ENCODE measurements at regions of chr5 and their contacts with region 1.

Region 1: DNA sequence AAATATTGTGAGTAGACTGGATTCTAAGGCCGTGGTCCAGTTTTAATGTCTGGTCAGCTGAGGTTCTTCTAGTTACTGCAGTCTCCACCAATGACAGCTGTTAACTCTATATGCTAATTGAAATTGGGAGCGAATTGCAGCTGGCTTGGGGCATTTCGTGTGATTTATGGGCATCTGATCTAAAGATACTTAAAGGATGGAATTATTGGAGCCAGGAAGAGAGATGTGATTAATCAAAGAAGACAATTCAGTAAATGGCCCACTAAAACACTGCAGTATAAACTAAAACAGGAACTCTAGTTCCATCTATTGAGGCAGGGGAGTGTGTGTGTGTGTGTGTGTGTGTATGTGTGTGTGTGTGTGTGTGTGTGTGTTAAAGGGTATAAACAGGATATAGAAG is 157.5 kb upstream of the IQGAP2 start:
- DNase-seq: no peak
- H3K4me3 ChIP-seq: no peak overlapping the region
- H3K27ac ChIP-seq: no peak overlapping the region
- H3K4me1 ChIP-seq: no peaks in the 10 kb centered on the region
- H3K27me3 ChIP-seq: no peaks in the 10 kb centered on the region
- CTCF ChIP-seq: no peak
- POLR2A ChIP-seq: no peak

Region 2: DNA sequence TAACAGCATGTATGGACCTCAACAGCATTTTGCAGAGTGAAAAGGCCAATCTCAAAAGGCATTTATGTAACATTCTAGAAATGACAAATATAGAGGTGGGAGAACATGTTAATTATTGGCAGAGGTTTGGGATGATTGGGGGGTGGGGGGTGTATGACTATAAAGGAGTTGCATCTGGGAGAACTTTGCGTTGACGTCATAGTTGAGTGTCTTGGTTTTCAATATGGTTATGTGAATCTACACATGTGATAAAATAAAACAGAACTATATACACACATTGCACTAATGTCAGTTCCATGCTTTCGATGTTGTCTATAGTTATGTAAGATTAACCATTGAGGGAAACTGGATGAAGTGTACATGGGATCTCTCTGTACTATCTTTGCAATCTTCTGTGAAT is 23.3 kb before region 1 on chr5:
- intact Hi-C with region 1: loop called (anchors 1 kb)
- DNase-seq: peak in 1 of 2 donors; percentile 20
- H3K4me3 ChIP-seq: no peak overlapping the region
- H3K27ac ChIP-seq: no peak overlapping the region
- H3K4me1 ChIP-seq: no peaks in the 10 kb centered on the region
- H3K27me3 ChIP-seq: no peaks in the 10 kb centered on the region
- CTCF ChIP-seq: no peak
- POLR2A ChIP-seq: no peak